Spleen (tissue), 13 donors: ENCODE measurements at regions of chr7 and their contacts with region 1.

Region 1: DNA sequence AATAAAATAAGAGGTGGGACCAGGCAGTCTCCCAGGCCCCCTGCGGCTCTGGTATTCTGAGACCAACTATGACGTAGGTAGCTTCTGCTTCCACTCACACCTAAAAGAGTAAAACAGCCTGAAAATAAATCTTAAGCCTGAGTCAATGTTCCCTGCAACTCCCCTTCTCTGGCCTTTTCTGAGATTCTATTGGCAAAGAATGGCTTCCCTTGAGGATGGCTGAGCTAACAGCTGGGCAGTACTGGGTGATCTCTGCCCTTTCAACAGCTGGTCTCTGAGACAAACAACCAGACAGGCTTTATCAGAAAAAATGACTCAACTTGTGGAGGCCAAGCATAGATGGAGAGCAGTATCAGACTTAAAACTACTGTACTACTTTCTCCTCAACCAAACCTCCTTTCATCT is 58.7 kb downstream of the CREB3L2 start:
- DNase-seq: no peak
- H3K4me3 ChIP-seq: no peak overlapping the region
- H3K27ac ChIP-seq: peak overlapping the region in 4 of 8 donors; percentile 4 to 35 (median 20)
- H3K4me1 ChIP-seq: peaks cover 0 to 6% (median 3%) of the 10 kb centered on the region in 6 donors
- H3K27me3 ChIP-seq: no peaks in the 10 kb centered on the region
- CTCF ChIP-seq: no peak
- POLR2A ChIP-seq: no peak

Region 2: GRCh38 chr7:137798073-137798763 is 144.9 kb before region 1 on chr7:
- intact Hi-C with region 1: no loop called
- DNase-seq: no peak
- H3K4me3 ChIP-seq: no peak overlapping the region
- H3K27ac ChIP-seq: no peak overlapping the region
- H3K4me1 ChIP-seq: no peaks in the 10 kb centered on the region
- H3K27me3 ChIP-seq: no peaks in the 10 kb centered on the region
- CTCF ChIP-seq: no peak
- POLR2A ChIP-seq: no peak

Region 3: GRCh38 chr7:138002096-138002827 is 59.1 kb after region 1 on chr7:
- intact Hi-C with region 1: loop called (anchors 10 kb)
- DNase-seq: peak; percentile 98
- H3K4me3 ChIP-seq: peak overlapping the region; percentile 75 to 99 (median 90)
- H3K27ac ChIP-seq: peak overlapping the region; percentile 79 to 95 (median 90)
- H3K4me1 ChIP-seq: peaks cover 21 to 51% (median 31%) of the 10 kb centered on the region in 6 donors
- H3K27me3 ChIP-seq: no peaks in the 10 kb centered on the region
- CTCF ChIP-seq: peak; percentile 89 to 98 (median 94)
- POLR2A ChIP-seq: peak in 1 of 3 donors; percentile 11

Region 4: GRCh38 chr7:138089080-138089991 is 146.2 kb after region 1 on chr7:
- intact Hi-C with region 1: no loop called
- DNase-seq: no peak
- H3K4me3 ChIP-seq: no peak overlapping the region
- H3K27ac ChIP-seq: no peak overlapping the region
- H3K4me1 ChIP-seq: no peaks in the 10 kb centered on the region
- H3K27me3 ChIP-seq: no peaks in the 10 kb centered on the region
- CTCF ChIP-seq: no peak
- POLR2A ChIP-seq: no peak

Region 5: GRCh38 chr7:138214926-138215325 is 271.8 kb after region 1 on chr7:
- intact Hi-C with region 1: no loop called
- DNase-seq: no peak
- H3K4me3 ChIP-seq: no peak overlapping the region
- H3K27ac ChIP-seq: no peak overlapping the region
- H3K4me1 ChIP-seq: no peaks in the 10 kb centered on the region
- H3K27me3 ChIP-seq: no peaks in the 10 kb centered on the region
- CTCF ChIP-seq: no peak
- POLR2A ChIP-seq: no peak

Region 6: GRCh38 chr7:139004321-139005075 is 1061.3 kb after region 1 on chr7:
- intact Hi-C with region 1: no loop called
- DNase-seq: no peak
- H3K4me3 ChIP-seq: no peak overlapping the region
- H3K27ac ChIP-seq: no peak overlapping the region
- H3K4me1 ChIP-seq: no peaks in the 10 kb centered on the region
- H3K27me3 ChIP-seq: no peaks in the 10 kb centered on the region
- CTCF ChIP-seq: no peak
- POLR2A ChIP-seq: no peak